Lower leg skin (tissue), 4 donors: ENCODE measurements at regions of chr2 and their contacts with region 1.

Region 1: GRCh38 chr2:153354406-153354805 is 124.2 kb downstream of the RPRM start:
- DNase-seq: no peak
- H3K4me3 ChIP-seq: no peak overlapping the region
- CTCF ChIP-seq: no peak
- POLR2A ChIP-seq: no peak

Region 2: GRCh38 chr2:153311432-153311831 is 43.0 kb before region 1 on chr2:
- intact Hi-C with region 1: loop called (anchors 2 kb)
- DNase-seq: no peak
- H3K4me3 ChIP-seq: no peak overlapping the region
- CTCF ChIP-seq: no peak
- POLR2A ChIP-seq: no peak